ENCODE measurements at regions of chr13 and their contacts with region 1.

Region 1: DNA sequence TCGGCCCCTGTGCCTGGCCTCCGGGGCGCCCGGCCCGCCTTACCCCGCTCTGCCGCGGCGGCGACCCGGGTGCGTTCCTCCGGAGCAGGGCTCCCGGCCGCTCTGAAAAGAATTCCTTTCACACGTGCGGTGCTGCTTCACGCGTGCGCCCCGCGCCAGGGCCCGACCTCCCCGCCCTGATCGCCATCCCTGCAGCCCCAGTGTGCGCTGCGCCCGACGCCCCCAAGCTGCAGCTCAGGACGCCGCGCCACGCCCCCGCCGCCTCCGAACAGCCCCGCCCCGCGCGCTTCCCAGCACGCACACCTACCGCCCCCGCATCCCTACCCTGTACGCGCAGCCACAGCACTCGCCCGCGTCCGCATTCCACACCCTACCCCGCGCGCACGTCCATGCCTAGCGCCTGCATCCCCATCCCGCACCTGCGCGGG is at the start of gene GJA3:
- DNase-seq: peak; percentile 52
- ATAC-seq: peak; percentile 83 to 88
- total RNA-seq, gene GJA3: 6.2 to 8.0 TPM

Region 2: GRCh38 chr13:20033486-20033885 is 127.4 kb before region 1 on chr13:
- intact Hi-C with region 1: loop called in 1 of 2 experiments (anchors 5 kb)
- DNase-seq: no peak
- ATAC-seq: no peak

Region 3: DNA sequence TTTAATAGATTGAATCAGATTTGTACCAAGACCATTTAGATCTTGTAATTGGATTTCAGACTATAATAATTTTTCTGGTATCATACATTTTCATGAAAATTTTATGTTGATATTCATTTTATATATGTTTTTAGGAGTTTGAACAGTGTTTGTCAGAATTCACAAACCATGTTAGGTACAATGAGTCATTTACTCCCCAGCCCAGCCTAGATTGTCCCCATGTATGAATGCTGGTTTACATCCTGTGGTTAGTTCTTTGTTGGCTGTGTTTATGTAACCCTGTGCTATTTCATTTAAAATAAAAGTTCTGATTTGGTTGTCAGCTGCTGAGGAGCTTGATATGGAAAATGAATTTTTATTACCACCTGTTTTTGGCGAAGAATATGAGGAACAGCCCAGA is 96.7 kb before region 1 on chr13:
- intact Hi-C with region 1: loop called in 1 of 2 experiments (anchors 10 kb)
- DNase-seq: no peak
- ATAC-seq: no peak

Region 4: DNA sequence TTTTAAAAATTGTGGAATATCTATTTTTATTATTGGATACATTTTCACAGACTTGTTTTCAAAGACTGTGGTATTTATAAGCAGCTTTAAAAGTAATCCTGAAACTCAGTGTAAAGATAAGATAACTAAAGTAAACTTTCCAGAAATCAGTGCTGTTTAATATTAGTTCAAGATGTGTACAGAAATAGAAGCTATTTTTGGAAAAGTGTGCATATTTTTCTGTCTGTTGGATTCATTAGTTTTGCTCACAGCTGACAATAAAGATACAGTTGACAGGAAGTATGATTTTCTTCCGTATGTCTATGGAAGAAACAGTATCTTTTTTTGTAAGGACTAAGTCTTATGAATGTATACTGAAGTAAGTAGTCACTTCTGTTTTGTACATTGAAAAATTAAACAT is 85.9 kb before region 1 on chr13:
- intact Hi-C with region 1: no loop called
- DNase-seq: no peak
- ATAC-seq: no peak

Region 5: DNA sequence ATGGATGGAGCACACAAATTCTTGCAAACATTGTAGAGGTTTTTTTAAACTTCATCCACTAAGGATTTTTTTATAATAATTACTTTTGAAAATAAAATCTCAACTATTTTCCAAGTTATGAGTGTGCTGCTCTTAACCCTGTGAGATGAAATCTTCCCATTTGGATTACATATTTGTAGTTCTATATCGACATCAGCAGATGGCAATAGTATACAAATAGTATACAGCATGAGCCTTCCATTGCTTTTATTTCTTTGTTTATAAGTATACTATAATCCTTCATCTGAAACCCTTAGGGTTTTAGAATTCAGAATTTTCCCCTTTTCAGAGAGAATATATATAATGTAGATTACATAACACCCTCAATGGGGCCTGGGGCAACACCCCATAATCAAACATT is 70.5 kb before region 1 on chr13:
- intact Hi-C with region 1: loop called in 1 of 2 experiments (anchors 5 kb)
- DNase-seq: no peak
- ATAC-seq: peak in 1 of 2 donors; percentile 34

Region 6: DNA sequence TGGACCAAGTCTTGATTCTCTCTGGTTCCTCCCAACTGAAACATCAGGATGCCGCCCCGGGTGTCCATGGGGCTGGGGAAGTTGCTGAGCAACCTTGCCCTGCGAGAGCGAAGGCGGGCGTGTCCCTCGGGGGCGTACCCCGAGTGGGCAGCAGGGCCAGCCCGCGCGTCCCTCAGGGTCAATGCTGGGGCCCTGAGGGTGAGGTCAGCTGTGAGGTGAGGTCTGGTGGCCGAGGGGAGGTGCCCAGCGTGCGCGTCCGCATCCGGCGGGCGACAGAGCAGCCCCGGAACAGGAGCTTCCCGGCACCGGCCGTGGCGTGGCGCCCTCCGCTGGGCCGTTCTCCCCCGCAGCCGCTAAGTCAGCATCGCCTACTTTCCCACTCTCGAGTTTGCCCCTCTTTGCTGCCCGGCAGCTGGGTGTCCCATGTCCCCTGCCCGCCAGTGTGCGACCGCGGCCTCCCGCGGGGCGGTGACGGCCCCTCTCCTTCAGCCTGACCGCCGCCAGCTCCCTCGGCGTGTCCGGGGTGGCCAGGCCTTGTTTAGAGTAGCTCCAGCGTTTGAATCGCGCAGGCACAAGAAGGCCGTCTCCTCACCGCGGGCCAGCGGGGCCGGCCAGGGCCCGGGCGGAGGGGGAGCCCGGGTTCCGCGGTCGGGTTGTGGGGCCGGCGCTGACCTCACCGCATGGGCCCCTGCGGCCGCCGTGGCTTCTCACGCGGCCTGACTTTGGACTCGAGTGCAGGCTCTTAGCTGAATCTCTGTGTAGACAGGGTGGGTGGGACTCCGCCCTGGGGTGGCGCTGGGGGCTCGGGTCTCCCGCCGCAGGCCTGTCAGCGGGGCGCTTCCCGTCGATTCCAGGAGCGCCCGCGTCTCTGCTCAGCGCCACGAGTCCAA is 33.0 kb before region 1 on chr13:
- intact Hi-C with region 1: loop called in 1 of 2 experiments (anchors 2 kb)
- DNase-seq: peak; percentile 75
- ATAC-seq: peak; percentile 87 to 89

Region 7: DNA sequence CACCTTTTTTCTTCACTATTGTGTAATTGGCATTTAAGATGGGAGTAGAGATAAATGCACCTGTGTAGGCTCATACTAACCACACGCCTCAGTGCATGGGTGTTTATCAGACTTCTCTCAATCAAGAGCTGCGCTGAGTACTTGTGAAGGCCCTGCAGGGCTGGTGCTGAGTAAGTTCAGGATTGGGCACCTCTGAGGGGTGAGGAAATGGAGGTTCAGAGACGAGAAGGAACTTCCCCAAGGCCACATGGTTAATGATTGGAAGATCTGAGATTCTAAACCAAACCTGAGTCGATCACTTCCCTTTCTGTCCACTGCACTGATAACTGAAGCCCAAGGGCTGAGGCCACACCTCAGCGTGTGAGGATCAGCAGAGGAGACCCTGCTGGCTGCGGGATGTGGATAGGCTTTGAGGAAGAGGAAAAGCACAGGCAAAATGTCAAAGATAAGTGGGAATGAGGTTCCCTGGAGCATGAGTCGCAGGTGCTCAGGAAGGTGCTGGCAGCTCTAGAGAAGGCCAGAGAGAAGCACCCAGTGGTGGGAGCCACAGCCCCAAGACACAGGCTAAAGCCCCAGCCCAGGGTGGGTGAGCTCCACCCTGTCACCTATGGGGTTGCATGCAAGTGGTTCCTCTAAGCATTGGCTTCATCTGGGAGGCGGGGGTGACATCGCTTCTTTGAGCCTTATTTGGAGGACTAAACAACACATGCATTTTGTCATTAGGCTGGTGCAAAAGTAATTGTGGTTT is 103.6 kb after region 1 on chr13:
- intact Hi-C with region 1: no loop called
- DNase-seq: no peak
- ATAC-seq: no peak